ENCODE measurements at regions of chr5 and their contacts with region 1.

Region 1: DNA sequence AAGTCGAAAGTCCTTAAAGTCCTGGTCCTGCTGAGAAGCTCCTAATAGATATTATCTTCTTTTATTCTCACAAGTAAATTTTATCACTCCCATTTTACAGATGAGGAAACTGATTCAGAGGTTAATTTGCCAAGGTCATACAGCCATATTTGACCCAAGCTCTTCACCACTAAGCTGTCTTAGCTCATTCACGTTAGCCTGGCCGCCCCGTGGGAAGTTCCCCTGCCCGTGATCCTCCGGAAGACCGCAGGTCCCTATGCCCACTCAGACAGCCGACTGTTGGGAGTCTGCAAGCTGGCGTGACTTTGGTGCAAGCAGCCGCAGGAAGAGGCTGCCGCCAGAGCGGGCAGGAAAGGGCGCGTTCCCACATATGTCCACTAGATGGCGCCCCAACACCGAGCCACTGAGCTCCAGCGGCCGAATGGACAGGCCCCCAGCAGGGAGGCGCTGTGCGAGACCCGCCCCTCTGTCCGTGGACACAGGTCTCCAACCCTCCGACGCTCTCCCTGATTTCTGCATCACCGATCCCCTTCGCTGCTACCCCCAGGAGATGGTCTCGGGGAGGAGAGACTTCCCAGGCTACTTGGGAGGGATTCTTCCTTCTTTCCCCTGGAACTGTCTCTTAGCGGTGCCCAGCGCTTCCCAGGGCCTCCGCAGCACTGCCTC is 10.0 kb upstream of the ARAP3 start:
- DNase-seq: peak; percentile 52
- ATAC-seq: peak; percentile 95
- H3K4me3 ChIP-seq: peak overlapping the region in 1 of 3 experiments; percentile 52; a peak in 1 of 6 replicates
- H3K27ac ChIP-seq: no peak overlapping the region
- H3K4me1 ChIP-seq: no peaks in the 10 kb centered on the region
- H3K27me3 ChIP-seq: peaks cover 11 to 48% of the 10 kb centered on the region in 2 experiments
- CTCF ChIP-seq: peak; percentile 99
- EP300 ChIP-seq: no peak
- POLR2A ChIP-seq: no peak
- RAD21 ChIP-seq: peak; percentile 98

Region 2: DNA sequence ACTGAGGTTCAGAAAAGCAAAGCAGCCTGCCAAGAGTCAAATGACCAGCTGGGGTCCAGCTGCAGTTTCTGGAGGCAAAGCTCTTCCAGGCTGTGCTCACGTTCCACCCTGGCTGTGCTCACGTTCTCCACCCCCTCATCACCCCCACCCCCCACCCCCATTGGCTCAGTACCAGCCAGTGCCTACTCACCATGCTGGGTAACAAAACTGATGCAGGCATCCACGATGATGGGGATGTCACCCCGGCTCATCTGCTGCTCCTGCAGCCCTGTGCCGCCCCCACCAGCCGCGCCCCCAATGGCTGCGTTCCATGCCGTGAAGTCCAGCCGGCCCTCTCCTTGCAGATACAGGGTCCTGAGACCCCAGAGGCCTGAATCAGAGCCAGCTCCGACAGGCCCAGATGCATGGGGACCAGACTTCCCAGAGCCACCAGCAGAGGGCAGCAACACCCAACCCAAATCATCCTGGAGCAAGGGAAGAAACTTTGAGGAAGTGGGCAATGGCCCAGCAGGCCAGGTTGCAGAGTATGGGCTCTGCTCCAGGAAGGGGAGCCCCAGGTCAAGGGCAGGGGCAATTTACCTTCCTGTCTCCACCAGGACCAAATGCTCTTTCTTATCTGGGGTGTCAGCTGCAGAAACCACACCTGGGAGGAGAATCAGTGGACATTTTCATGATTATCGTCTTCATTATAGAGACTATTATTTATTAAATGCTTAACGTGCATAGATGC is 27.1 kb before region 1 on chr5:
- CTCF ChIA-PET with region 1: no interaction called
- POLR2A ChIA-PET with region 1: no interaction called
- in situ Hi-C with region 1: no loop called
- intact Hi-C with region 1: loop called (anchors 1 kb)
- DNase-seq: peak; percentile 56
- ATAC-seq: peak; percentile 90
- H3K4me3 ChIP-seq: no peak overlapping the region
- H3K27ac ChIP-seq: no peak overlapping the region
- H3K4me1 ChIP-seq: 0 out of 2 replicates have a peak, but pooled peaks cover 4% of the 10 kb centered on the region
- H3K27me3 ChIP-seq: no peaks in the 10 kb centered on the region; a peak in 1 of 5 replicates
- CTCF ChIP-seq: peak; percentile 93
- EP300 ChIP-seq: no peak
- POLR2A ChIP-seq: no peak
- RAD21 ChIP-seq: peak; percentile 68

Region 3: GRCh38 chr5:141675672-141676071 is 16.3 kb before region 1 on chr5:
- CTCF ChIA-PET with region 1: no interaction called
- POLR2A ChIA-PET with region 1: no interaction called
- in situ Hi-C with region 1: no loop called
- intact Hi-C with region 1: no loop called
- DNase-seq: no peak
- ATAC-seq: no peak
- H3K4me3 ChIP-seq: no peak overlapping the region
- H3K27ac ChIP-seq: no peak overlapping the region
- H3K4me1 ChIP-seq: peaks cover 2% of the 10 kb centered on the region; the same call in 1 of the 2 replicates
- H3K27me3 ChIP-seq: peaks cover 2 to 5% of the 10 kb centered on the region in 2 experiments; a peak in 2 of 5 replicates
- CTCF ChIP-seq: no peak
- EP300 ChIP-seq: no peak
- POLR2A ChIP-seq: no peak
- RAD21 ChIP-seq: no peak

Region 4: GRCh38 chr5:143134900-143135299 is 1442.9 kb after region 1 on chr5:
- CTCF ChIA-PET with region 1: no interaction called
- POLR2A ChIA-PET with region 1: no interaction called
- in situ Hi-C with region 1: no loop called
- intact Hi-C with region 1: no loop called
- DNase-seq: no peak
- ATAC-seq: no peak
- H3K4me3 ChIP-seq: no peak overlapping the region
- H3K27ac ChIP-seq: no peak overlapping the region
- H3K4me1 ChIP-seq: peaks cover 19% of the 10 kb centered on the region
- H3K27me3 ChIP-seq: no peaks in the 10 kb centered on the region
- CTCF ChIP-seq: no peak
- EP300 ChIP-seq: no peak
- POLR2A ChIP-seq: no peak
- RAD21 ChIP-seq: no peak